ENCODE measurements at regions of chr7 and their contacts with region 1.

Region 1: DNA sequence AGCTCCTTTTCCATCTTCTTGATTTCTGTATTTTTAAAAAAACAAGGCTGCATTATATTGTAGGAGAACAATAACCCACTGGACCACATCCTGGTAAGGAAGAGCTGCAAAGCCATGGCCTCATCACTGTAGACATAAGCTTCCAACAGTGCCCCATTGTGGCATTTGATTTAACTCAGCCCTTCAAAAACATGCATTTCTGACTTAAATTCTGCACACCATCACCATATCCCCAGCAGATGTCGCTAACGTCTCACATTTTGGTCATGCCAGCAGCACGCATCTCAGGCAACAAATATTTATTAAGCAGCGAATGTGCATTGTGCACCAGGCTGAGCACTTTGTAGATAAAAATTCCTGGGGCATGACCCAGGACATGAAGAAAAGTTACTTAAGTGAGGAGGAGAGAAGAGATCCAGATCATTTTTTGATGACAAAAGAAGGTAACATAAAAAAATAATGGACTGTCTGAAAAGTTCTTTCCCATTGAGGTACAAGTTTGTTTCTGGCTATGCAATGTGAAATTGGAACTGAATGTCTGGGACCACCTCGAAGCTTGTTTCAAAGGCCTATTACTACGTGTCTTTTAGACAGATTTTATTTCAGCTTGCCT is 164.6 kb upstream of the CDCA7L start:
- DNase-seq: no peak
- ATAC-seq: peak; percentile 77
- H3K4me3 ChIP-seq: no peak overlapping the region
- H3K27ac ChIP-seq: no peak overlapping the region
- H3K4me1 ChIP-seq: no peaks in the 10 kb centered on the region
- H3K27me3 ChIP-seq: no peaks in the 10 kb centered on the region
- CTCF ChIP-seq: peak; percentile 74

Region 2: GRCh38 chr7:22001345-22002004 is 108.9 kb before region 1 on chr7:
- intact Hi-C with region 1: no loop called
- DNase-seq: no peak
- ATAC-seq: peak; percentile 84
- H3K4me3 ChIP-seq: no peak overlapping the region
- H3K27ac ChIP-seq: no peak overlapping the region
- H3K4me1 ChIP-seq: no peaks in the 10 kb centered on the region
- H3K27me3 ChIP-seq: no peaks in the 10 kb centered on the region
- CTCF ChIP-seq: peak; percentile 87

Region 3: DNA sequence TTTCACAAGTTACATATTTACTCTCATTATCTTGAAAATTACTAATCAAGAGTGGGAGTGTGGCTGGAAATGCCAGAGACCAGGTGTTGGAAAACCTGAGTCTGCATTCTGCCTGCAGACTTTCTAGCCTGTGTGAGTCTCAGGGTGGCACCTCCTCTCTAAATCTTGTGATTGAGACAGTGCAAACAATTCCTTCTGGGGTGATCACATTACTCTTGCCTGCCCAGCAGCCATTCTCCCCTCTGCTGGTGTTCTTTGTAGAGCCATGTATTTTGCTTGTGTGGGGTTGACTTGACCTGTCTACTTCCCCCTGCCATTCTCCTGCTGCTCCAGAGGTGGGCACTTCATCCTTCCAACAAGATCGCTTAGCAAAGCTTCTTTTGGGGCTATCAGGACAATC is 145.5 kb after region 1 on chr7:
- intact Hi-C with region 1: loop called (anchors 10 kb)
- DNase-seq: no peak
- ATAC-seq: peak; percentile 67
- H3K4me3 ChIP-seq: no peak overlapping the region
- H3K27ac ChIP-seq: no peak overlapping the region
- H3K4me1 ChIP-seq: peaks cover 15% of the 10 kb centered on the region
- H3K27me3 ChIP-seq: no peaks in the 10 kb centered on the region
- CTCF ChIP-seq: no peak

Region 4: GRCh38 chr7:22488643-22489462 is 378.5 kb after region 1 on chr7:
- intact Hi-C with region 1: loop called (anchors 5 kb)
- DNase-seq: no peak
- ATAC-seq: peak; percentile 96
- H3K4me3 ChIP-seq: no peak overlapping the region
- H3K27ac ChIP-seq: no peak overlapping the region
- H3K4me1 ChIP-seq: peaks cover 3% of the 10 kb centered on the region
- H3K27me3 ChIP-seq: no peaks in the 10 kb centered on the region
- CTCF ChIP-seq: peak; percentile 95

Region 5: DNA sequence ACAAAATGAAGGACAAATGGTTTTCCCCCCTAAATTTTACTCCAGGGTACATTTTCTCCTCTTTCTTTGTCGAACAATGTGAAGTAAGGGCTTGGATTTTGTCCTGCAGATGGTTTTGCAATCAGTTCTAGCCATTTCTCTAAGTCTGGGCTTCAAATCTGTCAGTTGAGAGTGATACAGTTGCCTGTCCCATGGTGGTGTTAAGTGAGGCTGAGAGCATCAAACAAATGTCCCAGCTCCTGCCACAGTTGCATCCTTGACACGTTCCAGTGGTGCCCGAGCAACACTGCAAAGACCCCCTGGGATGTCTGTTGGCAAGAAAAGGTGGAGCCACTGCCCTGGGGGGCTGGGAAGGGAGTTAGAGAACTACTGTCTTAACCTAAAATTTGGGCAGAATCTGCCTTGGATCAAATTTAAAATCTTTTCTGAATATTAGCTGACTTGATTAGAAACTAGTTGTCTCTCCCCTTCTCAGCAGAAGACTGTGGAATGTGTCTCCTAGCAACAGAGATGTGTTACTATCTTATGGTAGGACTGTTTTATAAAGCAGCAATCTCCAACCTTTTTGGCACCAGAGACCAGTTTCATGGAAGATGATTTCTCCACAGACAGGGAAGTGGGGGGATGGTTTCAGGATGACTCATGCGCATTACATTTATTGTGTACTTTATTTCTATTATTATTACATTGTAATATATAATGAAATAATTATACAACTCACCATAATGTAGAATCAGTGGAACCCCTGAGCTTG is 491.7 kb after region 1 on chr7:
- intact Hi-C with region 1: no loop called
- DNase-seq: no peak
- ATAC-seq: no peak
- H3K4me3 ChIP-seq: no peak overlapping the region
- H3K27ac ChIP-seq: no peak overlapping the region
- H3K4me1 ChIP-seq: peaks cover 14% of the 10 kb centered on the region
- H3K27me3 ChIP-seq: no peaks in the 10 kb centered on the region
- CTCF ChIP-seq: no peak